Activated naive CD4-positive, alpha-beta T cell treated with anti-CD3 and anti-CD28 coated beads for 36 hours (primary cell): ENCODE measurements at regions of chr18 and their contacts with region 1.

Region 1: DNA sequence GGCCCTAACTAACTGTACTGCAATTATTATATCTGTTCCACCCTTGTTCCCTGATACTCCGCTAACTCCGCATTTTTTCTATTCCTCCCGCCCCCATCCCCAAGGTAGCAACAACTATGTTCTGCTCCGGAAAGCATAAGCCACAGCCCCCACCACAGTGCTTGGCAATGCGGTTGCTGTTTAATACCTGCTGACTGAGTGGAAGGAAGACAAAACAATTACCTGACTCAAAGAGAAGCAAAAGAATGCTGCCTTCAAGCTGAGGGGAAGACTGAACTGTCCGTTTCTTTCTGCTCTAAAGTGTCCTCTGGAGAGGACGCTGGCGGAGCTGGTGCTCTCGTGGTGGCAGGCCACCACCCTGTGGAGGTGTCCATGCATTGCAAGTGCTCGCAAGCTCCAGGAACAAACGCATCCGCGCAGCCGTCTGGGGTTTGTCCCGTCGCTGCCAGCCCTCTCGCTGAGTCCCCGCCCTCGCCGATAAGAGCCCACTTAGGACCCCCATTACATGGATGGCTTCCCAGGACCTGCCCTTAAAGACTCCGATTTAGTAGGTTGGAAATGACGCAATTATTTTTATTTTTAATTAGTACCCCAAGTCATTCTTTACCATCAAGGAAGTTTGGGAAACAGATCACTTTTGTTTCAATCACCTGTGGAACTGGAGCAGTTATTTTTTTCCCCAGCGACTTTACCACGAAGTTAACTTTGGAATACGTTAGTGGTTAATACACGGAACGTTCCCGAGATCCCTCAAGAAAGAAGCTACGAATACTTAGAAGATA is 1.6 kb upstream of the MYL12A start:
- DNase-seq: peak; percentile 91
- H3K4me3 Mint-ChIP-seq: peak overlapping the region; percentile 90
- H3K27ac Mint-ChIP-seq: peak overlapping the region; percentile 92
- H3K4me1 Mint-ChIP-seq: peaks cover 23% of the 10 kb centered on the region
- H3K27me3 Mint-ChIP-seq: no peaks in the 10 kb centered on the region

Region 2: GRCh38 chr18:2571200-2572143 is 674.6 kb before region 1 on chr18 and contains the starts of genes METTL4 and NDC80:
- CTCF ChIA-PET with region 1: no interaction called
- intact Hi-C with region 1: loop called (anchors 2 kb)
- DNase-seq: peak; percentile 90
- H3K4me3 Mint-ChIP-seq: peak within 1 kb of the TSS; percentile 97
- H3K27ac Mint-ChIP-seq: peak within 1 kb of the TSS; percentile 98
- H3K4me1 Mint-ChIP-seq: peaks cover 49% of the 10 kb centered on the region
- H3K27me3 Mint-ChIP-seq: no peaks in the 10 kb centered on the region
- total RNA-seq, gene METTL4: 19.4 to 20.6 TPM
- total RNA-seq, gene NDC80: 96.8 to 108 TPM

Region 3: GRCh38 chr18:2917259-2918047 is 328.6 kb before region 1 on chr18:
- CTCF ChIA-PET with region 1: interaction called, 12 read pairs
- intact Hi-C with region 1: no loop called
- DNase-seq: no peak
- H3K4me3 Mint-ChIP-seq: no peak overlapping the region
- H3K27ac Mint-ChIP-seq: peak overlapping the region; percentile 56
- H3K4me1 Mint-ChIP-seq: peaks cover 18% of the 10 kb centered on the region
- H3K27me3 Mint-ChIP-seq: no peaks in the 10 kb centered on the region

Region 4: GRCh38 chr18:2994603-2995432 is 251.2 kb before region 1 on chr18:
- CTCF ChIA-PET with region 1: interaction called, 18 read pairs
- intact Hi-C with region 1: loop called (anchors 1 kb)
- DNase-seq: peak; percentile 85
- H3K4me3 Mint-ChIP-seq: no peak overlapping the region
- H3K27ac Mint-ChIP-seq: peak overlapping the region; percentile 78
- H3K4me1 Mint-ChIP-seq: peaks cover 91% of the 10 kb centered on the region
- H3K27me3 Mint-ChIP-seq: no peaks in the 10 kb centered on the region

Region 5: GRCh38 chr18:3151399-3152264 is 94.4 kb before region 1 on chr18:
- CTCF ChIA-PET with region 1: interaction called, 35 read pairs
- intact Hi-C with region 1: loop called (anchors 1 kb)
- DNase-seq: no peak
- H3K4me3 Mint-ChIP-seq: no peak overlapping the region
- H3K27ac Mint-ChIP-seq: no peak overlapping the region
- H3K4me1 Mint-ChIP-seq: peaks cover 6% of the 10 kb centered on the region
- H3K27me3 Mint-ChIP-seq: no peaks in the 10 kb centered on the region

Region 6: DNA sequence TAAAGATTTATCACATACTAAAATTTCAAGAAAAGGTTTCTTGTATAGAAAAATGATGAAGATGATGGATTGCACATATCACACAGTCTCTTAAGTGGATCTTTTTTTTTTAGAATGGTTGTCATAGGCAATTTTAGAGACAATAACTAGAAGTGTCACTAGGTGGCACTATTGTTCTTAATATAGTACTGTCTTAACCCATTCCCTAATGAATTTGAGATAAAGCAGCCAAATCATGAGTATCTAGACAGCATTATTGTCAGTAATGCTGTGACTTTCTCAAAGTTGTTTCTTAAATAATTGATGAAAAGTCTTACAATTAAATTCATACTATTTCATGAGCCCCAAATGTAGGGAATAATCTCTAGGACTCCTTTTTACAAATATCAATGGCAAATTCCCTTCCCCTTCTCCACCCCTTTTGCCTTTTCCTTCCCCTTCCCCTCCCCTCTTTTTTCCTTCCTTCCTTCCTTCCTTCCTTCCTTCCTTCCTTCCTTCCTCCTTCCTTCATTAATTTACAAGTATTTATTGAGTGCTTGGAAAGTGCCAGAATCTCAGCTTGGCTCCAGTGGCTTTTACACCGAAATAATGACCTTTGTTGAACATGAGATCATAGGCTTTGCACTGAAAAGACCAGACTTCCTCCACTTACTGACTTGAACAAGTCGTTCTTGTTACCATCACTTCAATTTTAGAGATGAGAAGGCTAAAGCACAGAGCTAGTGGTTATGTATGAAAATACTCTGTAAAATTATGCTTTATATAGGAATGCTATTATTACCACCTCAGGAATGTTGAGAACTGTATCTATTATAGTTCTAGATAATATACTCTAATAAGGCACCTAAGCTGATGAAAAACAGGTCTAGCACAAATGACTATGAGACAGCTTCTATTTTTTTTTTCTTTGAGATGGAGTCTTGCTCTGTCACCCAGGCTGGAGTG is 35.7 kb after region 1 on chr18:
- CTCF ChIA-PET with region 1: no interaction called
- intact Hi-C with region 1: loop called (anchors 1 kb)
- DNase-seq: no peak
- H3K4me3 Mint-ChIP-seq: no peak overlapping the region
- H3K27ac Mint-ChIP-seq: no peak overlapping the region
- H3K4me1 Mint-ChIP-seq: peaks cover 6% of the 10 kb centered on the region
- H3K27me3 Mint-ChIP-seq: no peaks in the 10 kb centered on the region